Caco-2 (cell line): ENCODE measurements at regions of chr6 and their contacts with region 1.

Region 1: GRCh38 chr6:151765444-151765886 is 42.0 kb upstream of the ESR1 start:
- DNase-seq: peak; percentile 48 to 66
- H3K4me3 ChIP-seq: no peak overlapping the region
- H3K4me3 Mint-ChIP-seq: no peak overlapping the region
- H3K27ac Mint-ChIP-seq: no peak overlapping the region
- H3K4me1 ChIP-seq: peaks cover 3% of the 10 kb centered on the region; the same call in 1 of the 2 replicates
- H3K4me1 Mint-ChIP-seq: peaks cover 13% of the 10 kb centered on the region
- H3K27me3 ChIP-seq: no peaks in the 10 kb centered on the region
- H3K27me3 Mint-ChIP-seq: peaks cover 8% of the 10 kb centered on the region
- CTCF ChIP-seq: peak; percentile 61 to 69

Region 2: GRCh38 chr6:151440930-151441329 is 324.5 kb before region 1 on chr6:
- CTCF ChIA-PET with region 1: no interaction called
- POLR2A ChIA-PET with region 1: no interaction called
- intact Hi-C with region 1: loop called (anchors 10 kb)
- DNase-seq: no peak
- H3K4me3 ChIP-seq: no peak overlapping the region
- H3K4me3 Mint-ChIP-seq: no peak overlapping the region
- H3K27ac Mint-ChIP-seq: peak overlapping the region; percentile 16
- H3K4me1 ChIP-seq: peaks cover 45% of the 10 kb centered on the region
- H3K4me1 Mint-ChIP-seq: peaks cover 12% of the 10 kb centered on the region
- H3K27me3 ChIP-seq: no peaks in the 10 kb centered on the region
- H3K27me3 Mint-ChIP-seq: no peaks in the 10 kb centered on the region
- CTCF ChIP-seq: peak; percentile 32 to 37

Region 3: DNA sequence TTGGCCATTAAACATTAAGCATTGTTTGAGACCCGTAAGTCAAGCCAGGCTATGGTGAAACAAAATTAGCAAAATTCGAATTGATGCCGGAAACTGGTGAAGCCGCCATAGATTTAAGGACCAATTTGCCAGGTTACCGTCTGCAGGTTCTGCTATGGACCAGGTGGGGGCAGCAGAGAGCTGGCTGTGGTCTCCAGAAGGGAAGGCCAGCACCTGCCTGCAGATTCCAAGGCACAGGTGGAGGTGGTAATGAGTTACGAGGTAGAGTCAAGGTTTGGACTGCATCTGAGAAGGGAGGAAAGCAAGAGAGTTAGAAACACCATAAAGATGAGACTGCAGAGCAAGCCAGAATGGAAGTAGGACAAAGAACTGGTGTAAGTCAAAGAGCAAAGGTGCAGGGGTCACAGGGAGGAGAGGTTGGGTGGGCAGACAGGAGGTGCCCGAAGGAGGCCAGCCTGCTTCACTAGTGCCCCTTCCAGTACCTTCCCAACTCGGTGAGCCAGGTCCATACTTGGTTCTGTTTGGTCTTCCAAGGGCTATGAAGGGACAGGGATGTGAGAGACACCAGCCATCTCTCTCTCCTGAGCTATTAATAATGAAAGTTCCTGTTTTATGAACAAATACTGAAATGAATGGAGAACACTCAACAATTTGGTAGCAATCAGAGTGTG is 89.6 kb before region 1 on chr6:
- CTCF ChIA-PET with region 1: no interaction called
- POLR2A ChIA-PET with region 1: no interaction called
- intact Hi-C with region 1: loop called (anchors 1 kb)
- DNase-seq: peak; percentile 56 to 69
- H3K4me3 ChIP-seq: no peak overlapping the region
- H3K4me3 Mint-ChIP-seq: no peak overlapping the region
- H3K27ac Mint-ChIP-seq: peak overlapping the region; percentile 5
- H3K4me1 ChIP-seq: no peaks in the 10 kb centered on the region; the same call in 1 of the 2 replicates
- H3K4me1 Mint-ChIP-seq: peaks cover 14% of the 10 kb centered on the region
- H3K27me3 ChIP-seq: no peaks in the 10 kb centered on the region
- H3K27me3 Mint-ChIP-seq: no peaks in the 10 kb centered on the region
- CTCF ChIP-seq: peak; percentile 85 to 91

Region 4: GRCh38 chr6:151878262-151878661 is 112.8 kb after region 1 on chr6:
- CTCF ChIA-PET with region 1: no interaction called
- POLR2A ChIA-PET with region 1: no interaction called
- intact Hi-C with region 1: no loop called
- DNase-seq: no peak
- H3K4me3 ChIP-seq: no peak overlapping the region
- H3K4me3 Mint-ChIP-seq: no peak overlapping the region
- H3K27ac Mint-ChIP-seq: no peak overlapping the region
- H3K4me1 ChIP-seq: no peaks in the 10 kb centered on the region
- H3K4me1 Mint-ChIP-seq: no peaks in the 10 kb centered on the region
- H3K27me3 ChIP-seq: no peaks in the 10 kb centered on the region
- H3K27me3 Mint-ChIP-seq: peaks cover 10% of the 10 kb centered on the region
- CTCF ChIP-seq: no peak